Stomach (tissue), 19 donors: ENCODE measurements at regions of chr9 and their contacts with region 1.

Region 1: DNA sequence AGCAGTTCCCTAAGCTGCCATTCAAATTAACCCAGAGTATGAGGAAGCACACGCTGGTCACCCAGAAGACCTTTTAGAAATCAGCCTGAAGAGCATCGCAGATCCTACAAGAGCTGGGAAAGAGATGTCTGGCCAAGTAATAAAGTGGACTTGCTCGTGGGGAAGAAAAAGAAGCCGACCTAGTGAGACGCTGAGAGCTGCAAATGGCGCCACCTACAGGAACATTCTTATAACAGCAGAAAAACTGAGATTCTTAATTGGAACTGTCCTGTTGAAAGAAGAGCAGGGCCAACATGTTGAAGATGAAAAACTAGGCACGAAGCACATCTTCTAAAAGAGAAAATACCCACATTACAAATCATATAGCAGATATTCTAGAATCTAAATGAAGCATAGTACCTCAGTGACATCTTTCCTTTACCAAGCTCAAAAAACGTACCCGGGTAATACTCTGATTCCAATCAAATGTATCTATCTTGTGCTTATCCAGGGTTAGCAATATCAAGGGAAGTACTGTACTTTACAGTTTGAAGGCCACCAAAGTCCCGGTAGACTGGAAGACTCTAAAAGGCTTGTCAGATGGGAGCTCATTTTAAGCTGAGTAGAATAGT is 3.9 kb upstream of the GNAQ start:
- DNase-seq: peak; percentile 61 to 94
- H3K4me3 ChIP-seq: no peak overlapping the region
- H3K27ac ChIP-seq: peak overlapping the region in 3 of 5 donors; percentile 66 to 99 (median 93)
- H3K4me1 ChIP-seq: peaks cover 19 to 43% (median 26%) of the 10 kb centered on the region in 4 donors
- H3K27me3 ChIP-seq: no peaks in the 10 kb centered on the region
- CTCF ChIP-seq: peak in 5 of 7 experiments; percentile 70 to 84 (median 77)
- EP300 ChIP-seq: no peak
- POLR2A ChIP-seq: no peak

Region 2: GRCh38 chr9:77514886-77515711 is 520.4 kb before region 1 on chr9:
- intact Hi-C with region 1: no loop called
- DNase-seq: peak in 1 of 2 donors; percentile 36
- H3K4me3 ChIP-seq: no peak overlapping the region
- H3K27ac ChIP-seq: peak overlapping the region in 1 of 5 donors; percentile 17
- H3K4me1 ChIP-seq: peaks cover 0 to 7% (median 3%) of the 10 kb centered on the region in 4 donors
- H3K27me3 ChIP-seq: no peaks in the 10 kb centered on the region
- CTCF ChIP-seq: no peak
- EP300 ChIP-seq: no peak
- POLR2A ChIP-seq: no peak

Region 3: DNA sequence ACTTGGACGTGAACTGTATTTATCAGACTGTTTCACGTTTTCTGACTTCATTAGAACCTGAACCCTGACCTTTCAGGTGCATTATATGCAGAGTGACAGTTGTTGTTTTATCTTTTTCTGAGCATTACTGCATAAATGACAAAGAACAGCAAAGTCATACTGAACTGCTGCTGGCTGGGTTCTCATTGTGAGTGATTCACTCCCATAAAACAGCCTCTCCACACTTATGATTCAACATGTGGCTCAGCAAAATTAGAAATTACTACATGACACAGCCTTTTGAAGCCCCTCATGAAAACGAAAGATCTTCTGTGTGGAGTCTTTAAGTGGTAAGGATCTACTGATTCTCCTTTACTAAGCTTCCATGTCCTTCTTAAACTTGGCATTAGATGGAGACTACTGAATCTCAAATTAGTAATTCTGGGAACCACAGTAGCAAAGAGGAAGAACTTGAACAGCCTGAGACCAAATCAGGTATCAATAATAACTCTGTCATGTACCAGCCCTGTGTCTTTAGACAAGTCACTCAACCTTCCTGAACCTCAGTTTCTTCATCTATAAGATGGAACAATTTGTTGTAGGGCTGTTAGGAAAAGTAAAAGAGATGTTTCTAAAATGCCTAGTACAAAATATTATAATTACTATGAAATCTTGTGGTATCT is 215.1 kb before region 1 on chr9:
- intact Hi-C with region 1: no loop called
- DNase-seq: no peak
- H3K4me3 ChIP-seq: no peak overlapping the region
- H3K27ac ChIP-seq: peak overlapping the region in 2 of 5 donors; percentile 16 to 48
- H3K4me1 ChIP-seq: peaks cover 9 to 45% (median 26%) of the 10 kb centered on the region in 4 donors
- H3K27me3 ChIP-seq: no peaks in the 10 kb centered on the region
- CTCF ChIP-seq: no peak
- EP300 ChIP-seq: no peak
- POLR2A ChIP-seq: no peak

Region 4: DNA sequence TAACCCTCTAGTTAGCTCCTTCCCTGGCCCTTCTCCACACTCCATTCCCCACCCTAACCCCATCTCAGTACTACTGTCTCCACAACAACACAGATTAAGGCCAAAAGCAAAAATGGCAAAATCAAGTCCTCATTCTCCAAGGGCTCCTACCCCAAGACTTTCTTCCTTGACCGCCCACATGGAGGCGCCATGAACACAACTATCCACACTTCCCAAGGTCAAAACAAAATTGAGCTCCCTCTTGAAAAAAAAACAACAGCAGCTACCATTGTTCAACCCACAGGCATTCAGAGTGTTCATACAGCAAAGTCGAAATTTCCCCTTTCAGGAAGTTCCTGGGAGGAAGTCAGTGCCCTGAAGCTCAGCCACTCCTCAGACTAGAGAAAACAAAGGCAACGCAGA is 58.3 kb before region 1 on chr9:
- intact Hi-C with region 1: loop called (anchors 10 kb)
- DNase-seq: peak; percentile 66 to 76
- H3K4me3 ChIP-seq: no peak overlapping the region
- H3K27ac ChIP-seq: peak overlapping the region; percentile 11 to 76 (median 65)
- H3K4me1 ChIP-seq: peaks cover 45 to 89% (median 68%) of the 10 kb centered on the region in 4 donors
- H3K27me3 ChIP-seq: no peaks in the 10 kb centered on the region
- CTCF ChIP-seq: peak in 4 of 7 experiments; percentile 17 to 60 (median 49)
- EP300 ChIP-seq: no peak
- POLR2A ChIP-seq: no peak

Region 5: GRCh38 chr9:78097541-78097940 is 62.1 kb after region 1 on chr9:
- intact Hi-C with region 1: no loop called
- DNase-seq: peak in 1 of 2 donors; percentile 24
- H3K4me3 ChIP-seq: no peak overlapping the region
- H3K27ac ChIP-seq: peak overlapping the region in 1 of 5 donors; percentile 53
- H3K4me1 ChIP-seq: no peaks in the 10 kb centered on the region
- H3K27me3 ChIP-seq: no peaks in the 10 kb centered on the region
- CTCF ChIP-seq: no peak
- EP300 ChIP-seq: no peak
- POLR2A ChIP-seq: no peak